ENCODE measurements at regions of chr18 and their contacts with region 1.

Region 1: DNA sequence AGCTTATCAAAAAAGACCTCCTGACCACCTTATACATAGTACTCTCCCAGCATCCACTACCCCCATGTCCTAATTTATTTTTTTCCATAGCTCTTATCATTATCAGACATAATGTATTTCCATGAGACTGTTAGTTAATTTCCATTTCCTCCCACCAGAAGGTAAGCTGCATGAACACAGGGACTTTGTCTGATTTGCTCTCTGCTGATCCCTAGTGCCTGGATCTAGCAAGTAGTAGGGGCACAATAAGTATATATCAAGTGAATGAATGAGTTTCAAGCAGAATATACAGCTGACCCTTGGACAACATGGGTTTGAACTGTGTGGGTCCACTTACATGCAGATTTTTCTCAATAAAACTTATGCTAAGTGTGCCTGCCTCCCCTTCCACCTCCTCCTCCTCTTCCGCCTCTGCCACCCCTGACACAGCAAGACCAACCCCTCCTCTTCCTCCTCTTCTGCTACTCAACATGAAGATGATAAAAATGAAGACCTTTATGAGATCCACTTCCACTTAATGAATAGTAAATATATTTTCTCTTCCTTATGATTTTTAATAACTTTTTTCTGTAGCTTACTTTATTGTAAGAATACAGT is 53.8 kb downstream of the CTAGE1 start:
- DNase-seq: no peak
- ATAC-seq: 0 out of 2 replicates have a peak, but pooled peaks have one; percentile 40
- H3K4me3 ChIP-seq: no peak overlapping the region
- H3K27ac ChIP-seq: no peak overlapping the region
- H3K4me1 ChIP-seq: no peaks in the 10 kb centered on the region
- H3K27me3 ChIP-seq: peaks cover 7% of the 10 kb centered on the region; the same call in 1 of the 2 replicates
- CTCF ChIP-seq: 0 out of 6 replicates have a peak, but pooled peaks of 2 of the 3 experiments have one; percentile 18 to 19
- POLR2A ChIP-seq: no peak
- RAD21 ChIP-seq: peak; percentile 44

Region 2: DNA sequence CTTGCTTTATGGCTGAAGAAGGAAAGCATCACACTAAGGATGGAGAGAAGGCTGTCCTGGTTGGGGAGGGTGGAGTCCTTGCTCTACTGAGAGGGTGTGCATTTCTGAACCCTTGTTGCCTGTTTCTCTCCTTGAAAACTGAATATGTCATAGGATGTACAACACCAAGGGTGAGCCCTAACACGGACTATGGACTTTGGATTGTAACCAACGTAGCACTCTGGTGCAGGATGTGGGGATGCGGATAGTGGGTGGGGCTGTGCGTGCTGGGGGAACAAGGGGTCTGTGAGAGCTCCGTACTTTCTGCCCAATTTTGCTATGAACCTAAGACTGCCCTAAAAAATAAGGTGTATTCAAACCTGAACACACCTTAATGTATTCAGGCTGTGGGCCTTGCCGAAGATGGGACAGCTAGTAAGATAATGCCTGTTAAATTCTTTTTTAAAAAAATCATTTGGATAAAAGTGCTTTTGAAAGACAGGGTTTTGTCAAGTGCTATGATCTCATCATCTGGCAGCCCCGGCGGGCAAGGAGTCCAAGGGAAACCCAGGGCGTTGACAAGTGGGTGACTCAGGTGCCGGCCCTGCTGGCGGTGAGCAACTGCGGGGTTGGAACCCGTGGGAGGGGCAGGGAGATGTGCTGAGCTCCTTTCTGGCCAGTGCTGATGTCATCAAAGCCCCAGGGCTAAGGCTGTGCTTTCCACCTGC is 140.6 kb before region 1 on chr18:
- CTCF ChIA-PET with region 1: no interaction called
- POLR2A ChIA-PET with region 1: no interaction called
- RAD21 ChIA-PET with region 1: no interaction called
- intact Hi-C with region 1: loop called (anchors 10 kb)
- DNase-seq: peak; percentile 69
- ATAC-seq: peak; percentile 100
- H3K4me3 ChIP-seq: no peak overlapping the region
- H3K27ac ChIP-seq: no peak overlapping the region
- H3K4me1 ChIP-seq: peaks cover 10 to 13% of the 10 kb centered on the region in 2 experiments; a peak in 3 of 4 replicates
- H3K27me3 ChIP-seq: no peaks in the 10 kb centered on the region
- CTCF ChIP-seq: no peak
- POLR2A ChIP-seq: no peak
- RAD21 ChIP-seq: 0 out of 2 replicates have a peak, but pooled peaks have one; percentile 18